ENCODE measurements at regions of chr2 and their contacts with region 1.

Region 1: DNA sequence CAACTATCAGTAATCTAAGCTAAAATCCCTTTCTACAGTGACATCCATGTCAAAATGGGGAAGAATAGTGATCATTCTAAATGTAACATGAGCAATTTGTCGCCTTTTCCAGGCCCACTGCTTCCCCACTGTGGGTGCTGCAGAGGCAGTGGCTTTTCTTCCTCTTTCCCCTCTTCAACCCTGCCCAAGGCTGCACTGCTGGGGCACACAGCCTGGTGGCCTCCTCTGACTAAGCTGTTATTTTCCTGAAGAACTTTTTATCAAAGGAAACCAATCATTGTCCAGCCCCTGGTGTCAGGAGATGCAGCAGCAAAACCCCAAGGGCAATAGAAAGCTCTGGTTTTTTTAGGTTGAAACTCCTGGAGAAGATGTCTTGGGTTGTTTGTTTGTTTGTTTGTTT is 117.6 kb upstream of the KLF7 start:
- DNase-seq: peak; percentile 25
- ATAC-seq: peak; percentile 52
- H3K4me3 Mint-ChIP-seq: peak overlapping the region; percentile 11
- H3K27ac Mint-ChIP-seq: peak overlapping the region; percentile 71
- H3K4me1 Mint-ChIP-seq: peaks cover 46% of the 10 kb centered on the region
- H3K27me3 Mint-ChIP-seq: no peaks in the 10 kb centered on the region
- CTCF ChIP-seq: no peak

Region 2: GRCh38 chr2:207252416-207252815 is 30.9 kb before region 1 on chr2:
- CTCF ChIA-PET with region 1: no interaction called
- POLR2A ChIA-PET with region 1: no interaction called
- intact Hi-C with region 1: no loop called
- DNase-seq: no peak
- ATAC-seq: no peak
- H3K4me3 Mint-ChIP-seq: no peak overlapping the region
- H3K27ac Mint-ChIP-seq: no peak overlapping the region
- H3K4me1 Mint-ChIP-seq: peaks cover 3% of the 10 kb centered on the region
- H3K27me3 Mint-ChIP-seq: peaks cover 2% of the 10 kb centered on the region
- CTCF ChIP-seq: no peak

Region 3: GRCh38 chr2:207334624-207335371 is 51.4 kb after region 1 on chr2:
- CTCF ChIA-PET with region 1: interaction called, 5 read pairs
- POLR2A ChIA-PET with region 1: no interaction called
- intact Hi-C with region 1: loop called (anchors 5 kb)
- DNase-seq: peak; percentile 45
- ATAC-seq: peak; percentile 11
- H3K4me3 Mint-ChIP-seq: peak overlapping the region; percentile 16
- H3K27ac Mint-ChIP-seq: peak overlapping the region; percentile 79
- H3K4me1 Mint-ChIP-seq: peaks cover 66% of the 10 kb centered on the region
- H3K27me3 Mint-ChIP-seq: no peaks in the 10 kb centered on the region
- CTCF ChIP-seq: no peak

Measured in activated CD8-positive, alpha-beta T cell treated with anti-CD3 and anti-CD28 coated beads for 36 hours (primary cell).